ENCODE measurements at regions of chr15 and their contacts with region 1.

Region 1: GRCh38 chr15:74768771-74769342 is 13.0 kb upstream of the CSK start:
- DNase-seq: peak; percentile 42 to 79 (median 62)
- ATAC-seq: peak; percentile 52 to 55
- H3K4me3 Mint-ChIP-seq: peak overlapping the region in 2 of 10 donors; percentile 29 to 50
- H3K27ac Mint-ChIP-seq: peak overlapping the region in 3 of 10 donors; percentile 10 to 63 (median 16)
- H3K4me1 Mint-ChIP-seq: peaks cover 7 to 32% (median 28%) of the 10 kb centered on the region in 4 donors
- H3K27me3 Mint-ChIP-seq: peaks cover 0 to 6% (median 1%) of the 10 kb centered on the region in 5 donors

Region 2: GRCh38 chr15:74635228-74635627 is 133.6 kb before region 1 on chr15:
- POLR2A ChIA-PET with region 1: interaction called, 39 read pairs
- DNase-seq: peak; percentile 50 to 85 (median 66)
- ATAC-seq: peak; percentile 84 to 92
- H3K4me3 Mint-ChIP-seq: no peak overlapping the region
- H3K27ac Mint-ChIP-seq: peak overlapping the region in 3 of 10 donors; percentile 0 to 75 (median 55)
- H3K4me1 Mint-ChIP-seq: peaks cover 7 to 13% (median 9%) of the 10 kb centered on the region in 4 donors
- H3K27me3 Mint-ChIP-seq: no peaks in the 10 kb centered on the region

Region 3: DNA sequence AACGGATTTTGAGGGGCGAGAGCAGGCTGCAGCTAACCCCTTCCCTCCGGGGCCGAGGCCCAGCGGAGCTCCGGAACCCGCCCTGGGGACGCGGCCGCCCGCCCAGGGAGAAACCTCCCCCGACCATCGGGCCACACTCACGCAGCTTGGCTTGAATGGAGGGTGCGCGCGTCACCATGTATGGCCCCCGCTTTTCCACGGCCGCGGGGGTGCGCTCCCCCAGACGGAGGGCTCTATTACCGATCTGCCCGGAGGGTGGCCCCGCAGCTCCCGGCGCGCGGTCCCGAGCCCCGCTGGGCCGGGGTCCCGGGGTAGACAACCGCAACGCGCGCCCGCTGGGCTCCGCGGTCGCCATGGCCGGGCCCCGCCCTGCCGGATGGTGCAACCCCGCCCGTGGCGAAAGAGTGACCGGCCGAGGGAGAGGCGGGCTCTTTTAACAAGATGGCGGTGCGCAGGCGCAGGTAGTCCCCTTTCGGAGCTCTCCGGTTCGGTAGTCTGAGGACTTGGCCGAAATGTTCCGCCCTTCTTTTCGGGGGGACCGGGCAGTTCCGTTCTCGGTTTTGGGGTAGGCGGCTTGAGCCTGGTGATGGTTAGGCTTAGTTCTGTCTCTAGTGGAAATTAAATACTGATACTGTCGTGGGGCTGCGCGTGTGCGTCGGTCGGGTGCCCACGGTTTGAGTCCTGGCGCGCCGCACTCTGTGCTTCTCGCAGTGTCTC is 137.7 kb after region 1 on chr15 and contains the start of gene FAM219B:
- POLR2A ChIA-PET with region 1: interaction called, 13 read pairs
- DNase-seq: peak; percentile 37 to 85 (median 66)
- ATAC-seq: peak; percentile 79 to 83
- H3K4me3 Mint-ChIP-seq: peak within 1 kb of the TSS; percentile 94 to 99 (median 98)
- H3K27ac Mint-ChIP-seq: peak within 1 kb of the TSS; percentile 93 to 99 (median 97)
- H3K4me1 Mint-ChIP-seq: peaks cover 24 to 46% (median 42%) of the 10 kb centered on the region in 4 donors
- H3K27me3 Mint-ChIP-seq: no peaks in the 10 kb centered on the region
- polyA plus RNA-seq, gene FAM219B: 18.8 to 22.3 (median 20.7) TPM

Region 4: DNA sequence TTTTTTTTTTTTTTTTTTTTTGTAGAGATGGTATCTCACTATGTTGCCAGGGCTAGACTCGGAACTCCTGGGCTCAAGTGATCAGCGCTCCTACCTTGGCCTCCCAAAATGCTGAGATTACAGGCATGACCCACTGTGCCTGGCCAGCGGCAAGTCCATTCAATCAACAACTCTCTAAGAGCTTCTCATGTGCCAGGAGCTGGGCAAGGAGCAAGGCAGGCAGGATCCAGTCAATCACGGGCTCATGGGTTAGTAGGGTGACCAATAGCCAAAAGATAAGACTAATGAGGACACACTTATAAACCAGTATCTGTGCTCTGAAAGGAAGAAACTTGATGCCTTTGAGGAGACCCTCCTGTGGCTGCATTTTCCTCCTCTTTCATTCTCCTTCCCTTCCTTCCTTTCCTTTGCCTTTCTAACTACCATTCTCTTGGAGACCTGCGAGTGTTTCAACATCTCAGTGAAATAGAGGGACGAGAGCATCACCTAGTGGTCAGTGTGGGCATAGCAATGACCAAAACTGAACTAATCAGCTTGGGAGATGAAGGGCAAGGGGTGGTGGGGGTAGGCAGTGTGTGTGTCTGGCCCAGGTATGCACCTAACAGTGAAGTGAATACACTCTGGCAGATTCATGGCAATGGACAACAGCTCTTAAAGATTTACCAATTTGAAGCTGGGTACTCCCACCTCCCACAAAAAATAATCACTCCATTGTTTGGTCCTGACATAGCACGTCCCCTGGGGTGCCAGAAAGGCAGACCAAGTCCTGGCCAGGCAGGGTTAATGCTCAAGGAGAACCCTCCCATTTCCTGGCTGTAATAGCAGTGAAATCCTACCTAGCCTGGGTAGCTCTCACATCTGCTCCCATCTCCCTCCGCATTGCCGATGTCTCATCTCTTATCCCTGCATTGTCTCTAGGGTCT is 181.5 kb after region 1 on chr15:
- POLR2A ChIA-PET with region 1: interaction called, 10 read pairs
- DNase-seq: peak; percentile 57 to 88 (median 76)
- ATAC-seq: peak; percentile 88 to 96
- H3K4me3 Mint-ChIP-seq: no peak overlapping the region
- H3K27ac Mint-ChIP-seq: peak overlapping the region in 1 of 10 donors; percentile 4
- H3K4me1 Mint-ChIP-seq: peaks cover 5 to 13% (median 9%) of the 10 kb centered on the region in 4 donors
- H3K27me3 Mint-ChIP-seq: peaks cover 0 to under 1% (median 0%) of the 10 kb centered on the region in 5 donors